CD4-positive, alpha-beta T cell (primary cell): ENCODE measurements at regions of chr6 and their contacts with region 1.

Region 1: GRCh38 chr6:14638906-14639761 is 521.6 kb downstream of the CD83 start:
- DNase-seq: peak in 1 of 14 experiments; percentile 38
- ATAC-seq: no peak
- H3K4me3 ChIP-seq: no peak overlapping the region
- H3K4me3 Mint-ChIP-seq: no peak overlapping the region
- H3K27ac ChIP-seq: no peak overlapping the region
- H3K27ac Mint-ChIP-seq: no peak overlapping the region
- H3K4me1 ChIP-seq: peaks cover 40% of the 10 kb centered on the region
- H3K4me1 Mint-ChIP-seq: peaks cover 65% of the 10 kb centered on the region
- H3K27me3 ChIP-seq: no peaks in the 10 kb centered on the region
- H3K27me3 Mint-ChIP-seq: no peaks in the 10 kb centered on the region
- CTCF ChIP-seq: no peak

Region 2: DNA sequence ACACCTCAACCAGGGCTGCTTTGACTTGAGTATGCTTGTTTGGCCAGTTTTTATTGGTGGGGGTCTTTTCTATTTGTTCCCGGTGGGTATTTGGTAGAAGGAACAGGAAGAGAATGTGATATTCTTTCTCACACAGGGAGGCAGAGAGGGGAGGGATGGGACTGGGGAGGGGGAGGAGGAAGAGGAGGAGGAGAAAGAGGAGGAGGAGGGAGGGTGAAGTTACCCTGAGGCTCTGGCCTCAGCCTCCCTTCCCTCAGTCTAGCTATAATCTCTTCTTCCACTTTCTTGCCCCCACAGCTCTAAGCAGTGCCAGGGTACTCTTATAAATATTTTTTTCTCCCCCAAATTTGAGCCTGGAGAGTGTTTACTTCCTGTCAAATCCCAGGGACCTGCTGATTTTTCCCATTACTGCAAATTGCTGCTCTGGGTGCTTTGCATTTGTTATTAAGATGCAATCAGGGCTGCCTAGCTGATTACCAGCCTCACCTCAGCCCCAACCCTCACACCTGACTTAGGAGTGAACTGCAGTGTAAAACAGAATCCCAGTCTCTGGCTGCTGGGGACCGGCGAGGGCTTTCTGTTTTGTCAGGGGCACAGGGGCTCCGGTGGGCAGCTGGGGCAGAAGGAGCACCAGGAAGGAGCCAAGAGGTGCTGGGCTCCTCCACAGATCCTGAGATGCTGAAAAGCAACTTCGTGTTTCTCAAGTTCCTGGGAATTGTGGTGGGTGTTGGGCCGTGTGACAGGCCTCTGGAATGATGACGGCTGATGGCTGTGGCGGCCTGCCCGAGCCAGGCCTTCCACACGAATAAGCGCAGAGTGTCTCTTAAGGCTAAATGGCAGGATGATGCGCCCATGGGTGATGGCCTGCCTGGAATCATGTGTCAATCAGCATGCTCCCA is 380.2 kb before region 1 on chr6:
- CTCF ChIA-PET with region 1: no interaction called
- POLR2A ChIA-PET with region 1: no interaction called
- intact Hi-C with region 1: no loop called
- DNase-seq: no peak
- ATAC-seq: no peak
- H3K4me3 ChIP-seq: no peak overlapping the region
- H3K4me3 Mint-ChIP-seq: no peak overlapping the region
- H3K27ac ChIP-seq: no peak overlapping the region
- H3K27ac Mint-ChIP-seq: no peak overlapping the region
- H3K4me1 ChIP-seq: no peaks in the 10 kb centered on the region
- H3K4me1 Mint-ChIP-seq: no peaks in the 10 kb centered on the region
- H3K27me3 ChIP-seq: no peaks in the 10 kb centered on the region
- H3K27me3 Mint-ChIP-seq: no peaks in the 10 kb centered on the region
- CTCF ChIP-seq: no peak

Region 3: GRCh38 chr6:14518515-14519217 is 120.5 kb before region 1 on chr6:
- CTCF ChIA-PET with region 1: no interaction called
- POLR2A ChIA-PET with region 1: no interaction called
- intact Hi-C with region 1: no loop called
- DNase-seq: no peak
- ATAC-seq: no peak
- H3K4me3 ChIP-seq: no peak overlapping the region
- H3K4me3 Mint-ChIP-seq: no peak overlapping the region
- H3K27ac ChIP-seq: no peak overlapping the region
- H3K27ac Mint-ChIP-seq: no peak overlapping the region
- H3K4me1 ChIP-seq: no peaks in the 10 kb centered on the region
- H3K4me1 Mint-ChIP-seq: peaks cover 3% of the 10 kb centered on the region
- H3K27me3 ChIP-seq: no peaks in the 10 kb centered on the region
- H3K27me3 Mint-ChIP-seq: no peaks in the 10 kb centered on the region
- CTCF ChIP-seq: no peak

Region 4: GRCh38 chr6:14660806-14661579 is 21.9 kb after region 1 on chr6:
- CTCF ChIA-PET with region 1: interaction called, 3 read pairs
- POLR2A ChIA-PET with region 1: interaction called, 26 read pairs
- intact Hi-C with region 1: loop called in 1 of 2 experiments (anchors 2 kb)
- DNase-seq: peak in 12 of 14 experiments; percentile 6 to 79 (median 27)
- ATAC-seq: peak; percentile 79
- H3K4me3 ChIP-seq: no peak overlapping the region
- H3K4me3 Mint-ChIP-seq: no peak overlapping the region
- H3K27ac ChIP-seq: peak overlapping the region; percentile 1 to 74
- H3K27ac Mint-ChIP-seq: no peak overlapping the region
- H3K4me1 ChIP-seq: peaks cover 50% of the 10 kb centered on the region
- H3K4me1 Mint-ChIP-seq: peaks cover 45% of the 10 kb centered on the region
- H3K27me3 ChIP-seq: no peaks in the 10 kb centered on the region
- H3K27me3 Mint-ChIP-seq: no peaks in the 10 kb centered on the region
- CTCF ChIP-seq: no peak

Region 5: GRCh38 chr6:14734416-14735340 is 95.5 kb after region 1 on chr6:
- CTCF ChIA-PET with region 1: no interaction called
- POLR2A ChIA-PET with region 1: no interaction called
- intact Hi-C with region 1: loop called in 1 of 2 experiments (anchors 10 kb)
- DNase-seq: peak in 6 of 14 experiments; percentile 15 to 80 (median 48)
- ATAC-seq: peak; percentile 62
- H3K4me3 ChIP-seq: no peak overlapping the region
- H3K4me3 Mint-ChIP-seq: peak overlapping the region; percentile 9
- H3K27ac ChIP-seq: peak overlapping the region in 1 of 2 donors; percentile 31
- H3K27ac Mint-ChIP-seq: peak overlapping the region; percentile 33
- H3K4me1 ChIP-seq: peaks cover 50% of the 10 kb centered on the region
- H3K4me1 Mint-ChIP-seq: peaks cover 70% of the 10 kb centered on the region
- H3K27me3 ChIP-seq: no peaks in the 10 kb centered on the region
- H3K27me3 Mint-ChIP-seq: no peaks in the 10 kb centered on the region
- CTCF ChIP-seq: no peak